Activated CD4-positive, alpha-beta T cell treated with anti-CD3 and anti-CD28 coated beads for 36 hours (primary cell): ENCODE measurements at regions of chr3 and their contacts with region 1.

Region 1: GRCh38 chr3:152071924-152072323 is 196.8 kb upstream of the MBNL1 start:
- DNase-seq: peak; percentile 14
- ATAC-seq: peak; percentile 87
- H3K4me3 Mint-ChIP-seq: no peak overlapping the region
- H3K27ac Mint-ChIP-seq: no peak overlapping the region
- H3K4me1 Mint-ChIP-seq: peaks cover 2% of the 10 kb centered on the region
- H3K27me3 Mint-ChIP-seq: no peaks in the 10 kb centered on the region

Region 2: DNA sequence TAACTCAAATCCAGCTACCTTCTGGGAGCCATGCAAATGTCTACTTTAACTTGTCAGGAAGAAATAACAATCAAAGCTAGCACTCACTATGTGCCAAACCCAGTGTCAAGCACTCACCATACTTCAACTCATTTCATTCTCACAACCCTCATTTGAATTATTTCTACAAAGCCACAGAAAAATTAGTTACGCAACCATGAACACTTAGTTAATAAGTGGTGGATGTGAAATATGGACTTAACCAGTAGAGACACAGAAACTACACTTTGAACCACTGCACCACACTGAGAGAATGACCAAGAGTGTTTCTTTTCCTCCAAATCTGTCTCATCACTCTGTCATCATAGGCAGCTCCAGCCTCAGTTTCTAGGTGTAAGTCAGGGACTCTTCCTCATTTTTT is 105.8 kb after region 1 on chr3:
- CTCF ChIA-PET with region 1: no interaction called
- POLR2A ChIA-PET with region 1: no interaction called
- intact Hi-C with region 1: loop called in 1 of 2 experiments (anchors 2 kb)
- DNase-seq: no peak
- ATAC-seq: no peak
- H3K4me3 Mint-ChIP-seq: no peak overlapping the region
- H3K27ac Mint-ChIP-seq: no peak overlapping the region
- H3K4me1 Mint-ChIP-seq: peaks cover 45% of the 10 kb centered on the region
- H3K27me3 Mint-ChIP-seq: no peaks in the 10 kb centered on the region

Region 3: DNA sequence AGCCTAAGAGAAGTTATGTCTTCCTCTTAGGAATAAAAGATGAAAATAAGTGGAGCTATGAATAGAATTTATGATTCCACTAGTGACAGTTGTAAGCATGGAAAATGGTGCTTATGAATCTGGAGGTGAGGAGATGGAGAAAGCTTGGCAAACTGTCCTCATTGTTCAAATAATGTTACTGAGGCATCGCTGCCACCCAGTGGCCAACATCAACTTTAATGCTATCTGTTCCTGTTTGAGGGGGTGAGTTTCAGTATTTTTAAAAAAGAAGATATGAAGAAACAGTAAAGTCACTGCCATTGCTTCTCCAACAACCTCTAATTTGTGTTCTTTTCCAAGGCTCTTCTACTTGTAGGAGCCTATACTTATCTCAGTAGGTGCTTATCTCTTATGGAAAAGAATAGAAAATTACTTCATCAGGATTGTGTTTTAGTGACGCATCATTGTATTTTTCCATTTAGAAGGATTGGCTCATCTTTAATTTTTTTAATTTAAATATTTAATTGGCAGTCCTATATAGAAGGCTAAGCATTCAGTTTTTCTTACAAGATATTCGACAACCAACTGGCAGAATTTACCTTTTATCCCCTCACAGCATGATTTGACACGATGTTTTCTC is 502.6 kb after region 1 on chr3:
- CTCF ChIA-PET with region 1: no interaction called
- POLR2A ChIA-PET with region 1: no interaction called
- intact Hi-C with region 1: loop called in 1 of 2 experiments (anchors 5 kb)
- DNase-seq: peak; percentile 65
- ATAC-seq: no peak
- H3K4me3 Mint-ChIP-seq: no peak overlapping the region
- H3K27ac Mint-ChIP-seq: no peak overlapping the region
- H3K4me1 Mint-ChIP-seq: no peaks in the 10 kb centered on the region
- H3K27me3 Mint-ChIP-seq: peaks cover 3% of the 10 kb centered on the region